Lower leg skin (tissue), 4 donors: ENCODE measurements at regions of chr22 and their contacts with region 1.

Region 1: DNA sequence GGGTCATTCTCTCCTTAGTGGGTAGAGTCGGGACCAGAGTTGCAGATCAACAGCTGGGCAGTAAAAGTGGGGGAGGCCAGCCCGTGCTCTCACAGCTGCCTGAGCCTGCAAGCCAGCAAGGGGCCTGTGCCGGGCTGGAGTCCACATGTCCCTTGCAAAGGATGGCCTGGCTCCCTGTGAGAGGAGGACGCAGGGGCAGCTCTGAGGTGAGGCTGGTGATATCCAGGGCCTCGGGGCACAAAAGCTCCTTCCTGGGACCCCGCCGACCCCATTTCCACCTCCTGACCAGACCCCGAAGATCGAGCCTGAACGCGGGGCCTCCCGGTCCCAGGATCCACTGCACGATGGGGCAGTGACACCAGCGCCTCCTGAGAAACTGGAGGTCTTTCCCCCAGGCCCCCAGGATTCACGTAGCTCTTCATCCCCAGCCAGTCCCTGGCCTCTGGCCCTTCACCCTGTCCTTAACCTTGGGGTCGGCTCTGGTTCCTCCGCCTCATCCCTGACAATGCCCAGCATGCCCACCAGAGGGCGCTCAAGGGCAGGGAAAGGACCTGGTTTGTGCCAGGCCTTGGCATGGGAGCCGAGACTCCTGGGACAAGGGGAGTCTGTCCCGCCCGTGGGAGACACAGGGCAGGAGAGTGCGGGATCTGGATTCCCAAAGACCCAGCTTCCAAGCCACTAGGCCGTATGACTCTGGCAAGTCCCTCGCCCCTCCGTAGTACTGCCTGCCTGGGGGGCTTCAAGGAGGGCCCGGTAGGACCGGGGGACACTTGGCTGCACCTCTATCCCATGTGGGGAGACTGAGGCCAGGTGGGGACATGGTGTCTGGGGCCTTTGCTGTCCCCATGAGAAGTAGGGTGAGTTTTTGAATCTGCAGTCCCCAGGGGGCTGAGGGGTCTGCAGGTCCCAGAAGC is 17.8 kb upstream of the WNT7B start:
- DNase-seq: peak; percentile 80 to 96
- H3K4me3 ChIP-seq: no peak overlapping the region
- CTCF ChIP-seq: peak in 1 of 3 donors; percentile 98
- POLR2A ChIP-seq: no peak

Region 2: GRCh38 chr22:45493286-45493771 is 501.4 kb before region 1 on chr22:
- intact Hi-C with region 1: no loop called
- DNase-seq: peak in 1 of 2 donors; percentile 57
- H3K4me3 ChIP-seq: no peak overlapping the region
- CTCF ChIP-seq: no peak
- POLR2A ChIP-seq: no peak

Region 3: GRCh38 chr22:46116491-46116958 is 121.8 kb after region 1 on chr22:
- intact Hi-C with region 1: loop called (anchors 5 kb)
- DNase-seq: peak; percentile 90 to 99
- H3K4me3 ChIP-seq: no peak overlapping the region
- CTCF ChIP-seq: peak in 1 of 3 donors; percentile 78
- POLR2A ChIP-seq: no peak

Region 4: GRCh38 chr22:46309526-46310085 is 314.9 kb after region 1 on chr22:
- intact Hi-C with region 1: loop called (anchors 5 kb)
- DNase-seq: no peak
- H3K4me3 ChIP-seq: no peak overlapping the region
- CTCF ChIP-seq: no peak
- POLR2A ChIP-seq: no peak